Activated T-helper 2 cell treated with anti-CD3 and anti-CD28 coated beads, Interferon-gamma antibody, Interleukin-2, Interleukin-4, amounts not matched to agents 10 μg/mL and 5 μg/mL and 100 μg/mL, durations not matched to agents 14 hours and 24 hours and 36 hours (primary cell): ENCODE measurements at regions of chr6 and their contacts with region 1.

Region 1: DNA sequence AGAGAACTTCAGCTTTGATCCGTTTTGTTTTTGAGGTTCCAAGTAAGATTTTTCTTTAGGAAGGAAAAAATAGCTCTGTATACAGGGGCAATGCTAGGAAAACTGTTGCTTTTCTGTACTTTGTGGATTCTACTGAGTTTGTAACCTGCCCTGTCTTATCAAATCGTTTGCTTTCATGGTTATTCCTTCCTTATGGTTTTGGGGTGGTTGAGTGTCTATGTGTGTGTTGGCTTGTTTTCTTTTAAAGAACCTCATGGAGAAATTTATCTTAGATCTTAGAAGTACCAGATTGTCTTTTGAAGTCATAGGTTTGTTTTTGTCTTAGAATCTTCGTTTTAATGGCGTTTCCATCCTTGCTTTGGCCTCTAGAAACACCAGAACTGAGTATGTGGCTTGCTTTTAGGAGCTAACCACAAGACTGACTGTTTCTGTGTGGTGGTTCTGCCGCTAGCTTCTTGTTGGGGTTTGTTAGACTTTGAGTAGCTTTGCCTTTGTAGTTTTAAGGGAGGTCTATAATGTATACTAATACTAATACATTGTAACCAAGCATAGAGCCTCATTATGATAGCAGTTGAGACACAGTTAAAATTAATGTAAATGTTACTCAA is 86.8 kb downstream of the RPP40 start:
- DNase-seq: no peak
- H3K4me3 Mint-ChIP-seq: no peak overlapping the region
- H3K27ac Mint-ChIP-seq: peak overlapping the region; percentile 56
- H3K4me1 Mint-ChIP-seq: peaks cover 21% of the 10 kb centered on the region
- H3K27me3 Mint-ChIP-seq: no peaks in the 10 kb centered on the region

Region 2: GRCh38 chr6:4906293-4907276 is 10.5 kb before region 1 on chr6:
- intact Hi-C with region 1: no loop called
- DNase-seq: no peak
- H3K4me3 Mint-ChIP-seq: peak overlapping the region; percentile 60
- H3K27ac Mint-ChIP-seq: peak overlapping the region; percentile 50
- H3K4me1 Mint-ChIP-seq: peaks cover 31% of the 10 kb centered on the region
- H3K27me3 Mint-ChIP-seq: no peaks in the 10 kb centered on the region

Region 3: GRCh38 chr6:4928426-4928825 is 11.4 kb after region 1 on chr6:
- intact Hi-C with region 1: loop called (anchors 1 kb)
- DNase-seq: no peak
- H3K4me3 Mint-ChIP-seq: no peak overlapping the region
- H3K27ac Mint-ChIP-seq: no peak overlapping the region
- H3K4me1 Mint-ChIP-seq: peaks cover 33% of the 10 kb centered on the region
- H3K27me3 Mint-ChIP-seq: no peaks in the 10 kb centered on the region